ENCODE measurements at regions of chr17 and their contacts with region 1.

Region 1: GRCh38 chr17:42964161-42964932 is at the start of gene AARSD1:
- DNase-seq: peak; percentile 88
- H3K4me3 Mint-ChIP-seq: peak within 1 kb of the TSS; percentile 92
- H3K27ac Mint-ChIP-seq: peak within 1 kb of the TSS; percentile 86
- H3K4me1 Mint-ChIP-seq: peaks cover 4% of the 10 kb centered on the region
- H3K27me3 Mint-ChIP-seq: no peaks in the 10 kb centered on the region
- total RNA-seq, gene AARSD1: 62.3 and 75.3 TPM in 2 replicates

Region 2: DNA sequence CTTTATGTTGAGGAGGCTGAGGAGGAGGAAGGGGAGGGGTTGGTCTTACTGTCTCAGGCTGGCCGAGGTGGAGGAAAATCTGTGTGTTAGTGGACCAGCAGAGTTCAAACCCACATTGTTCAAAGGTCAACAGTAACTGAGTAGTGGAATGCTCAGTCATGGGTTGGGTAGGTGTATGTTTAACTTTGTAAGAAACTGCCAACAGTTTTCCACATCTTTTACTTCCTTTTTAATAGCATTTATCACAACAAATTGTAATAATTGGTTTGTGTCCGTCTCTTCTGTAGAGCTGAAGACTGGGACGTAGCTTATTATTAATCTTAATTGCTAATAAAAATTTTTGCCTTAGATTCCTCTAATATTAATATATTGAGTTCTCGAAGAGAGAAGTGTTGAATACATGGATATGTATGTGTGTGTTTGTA is 500.4 kb before region 1 on chr17:
- intact Hi-C with region 1: no loop called
- DNase-seq: no peak
- H3K4me3 Mint-ChIP-seq: no peak overlapping the region
- H3K27ac Mint-ChIP-seq: no peak overlapping the region
- H3K4me1 Mint-ChIP-seq: peaks cover 18% of the 10 kb centered on the region
- H3K27me3 Mint-ChIP-seq: no peaks in the 10 kb centered on the region

Region 3: DNA sequence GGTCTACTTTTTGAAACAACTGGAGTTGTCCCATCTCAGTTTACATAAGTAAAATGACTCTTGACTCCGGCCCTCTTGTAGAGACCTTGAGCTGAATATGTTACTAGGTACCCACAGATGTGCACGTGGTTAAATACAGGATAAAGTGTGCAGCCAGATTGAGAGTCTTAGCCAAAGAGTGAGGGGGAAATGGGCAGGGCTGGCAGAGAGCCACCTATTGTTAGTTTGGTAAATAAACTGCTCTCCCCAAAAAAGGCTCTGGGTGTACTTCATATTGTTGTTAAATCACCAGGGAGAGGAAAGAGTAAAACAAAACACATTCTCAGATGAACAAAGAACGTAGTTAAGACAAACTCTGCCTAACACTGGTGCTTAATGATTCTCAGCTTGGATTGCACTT is 43.4 kb before region 1 on chr17:
- intact Hi-C with region 1: no loop called
- DNase-seq: no peak
- H3K4me3 Mint-ChIP-seq: no peak overlapping the region
- H3K27ac Mint-ChIP-seq: no peak overlapping the region
- H3K4me1 Mint-ChIP-seq: peaks cover 7% of the 10 kb centered on the region
- H3K27me3 Mint-ChIP-seq: peaks cover 18% of the 10 kb centered on the region

Region 4: GRCh38 chr17:42937712-42938596 is 26.4 kb before region 1 on chr17:
- intact Hi-C with region 1: no loop called
- DNase-seq: no peak
- H3K4me3 Mint-ChIP-seq: no peak overlapping the region
- H3K27ac Mint-ChIP-seq: no peak overlapping the region
- H3K4me1 Mint-ChIP-seq: no peaks in the 10 kb centered on the region
- H3K27me3 Mint-ChIP-seq: peaks cover 11% of the 10 kb centered on the region

Region 5: GRCh38 chr17:42980398-42981397 is 16.4 kb after region 1 on chr17 and contains the start of gene RUNDC1:
- intact Hi-C with region 1: loop called (anchors 2 kb)
- DNase-seq: peak; percentile 87
- H3K4me3 Mint-ChIP-seq: peak within 1 kb of the TSS; percentile 99
- H3K27ac Mint-ChIP-seq: peak within 1 kb of the TSS; percentile 96
- H3K4me1 Mint-ChIP-seq: peaks cover 26% of the 10 kb centered on the region
- H3K27me3 Mint-ChIP-seq: no peaks in the 10 kb centered on the region
- total RNA-seq, gene RUNDC1: 18.7 and 19.9 TPM in 2 replicates

Region 6: GRCh38 chr17:42997984-42998938 is 33.9 kb after region 1 on chr17 and contains the start of gene RPL27:
- intact Hi-C with region 1: loop called (anchors 2 kb)
- DNase-seq: peak; percentile 97
- H3K4me3 Mint-ChIP-seq: peak within 1 kb of the TSS; percentile 93
- H3K27ac Mint-ChIP-seq: peak within 1 kb of the TSS; percentile 97
- H3K4me1 Mint-ChIP-seq: peaks cover 22% of the 10 kb centered on the region
- H3K27me3 Mint-ChIP-seq: no peaks in the 10 kb centered on the region
- total RNA-seq, gene RPL27: 1,137 and 1,172 TPM in 2 replicates

Measured in activated T-helper 2 cell treated with anti-CD3 and anti-CD28 coated beads, Interferon-gamma antibody, Interleukin-2, Interleukin-4, amounts not matched to agents 10 μg/mL and 5 μg/mL and 100 μg/mL, durations not matched to agents 14 hours and 24 hours and 36 hours (primary cell).